Calu3 (cell line): ENCODE measurements at regions of chr20 and their contacts with region 1.

Region 1: GRCh38 chr20:57999465-58000111 is 228.9 kb downstream of the ANKRD60 start:
- DNase-seq: peak; percentile 28
- H3K4me3 Mint-ChIP-seq: no peak overlapping the region
- H3K27ac Mint-ChIP-seq: peak overlapping the region; percentile 27
- H3K4me1 Mint-ChIP-seq: peaks cover 51% of the 10 kb centered on the region
- H3K27me3 Mint-ChIP-seq: no peaks in the 10 kb centered on the region
- CTCF ChIP-seq: no peak

Region 2: GRCh38 chr20:57748601-57749130 is 250.9 kb before region 1 on chr20:
- CTCF ChIA-PET with region 1: no interaction called
- intact Hi-C with region 1: loop called (anchors 5 kb)
- DNase-seq: peak; percentile 96
- H3K4me3 Mint-ChIP-seq: peak overlapping the region; percentile 75
- H3K27ac Mint-ChIP-seq: peak overlapping the region; percentile 98
- H3K4me1 Mint-ChIP-seq: peaks cover 32% of the 10 kb centered on the region
- H3K27me3 Mint-ChIP-seq: no peaks in the 10 kb centered on the region
- CTCF ChIP-seq: no peak

Region 3: GRCh38 chr20:57941602-57942381 is 57.8 kb before region 1 on chr20:
- CTCF ChIA-PET with region 1: no interaction called
- intact Hi-C with region 1: loop called (anchors 5 kb)
- DNase-seq: peak; percentile 49
- H3K4me3 Mint-ChIP-seq: peak overlapping the region; percentile 5
- H3K27ac Mint-ChIP-seq: no peak overlapping the region
- H3K4me1 Mint-ChIP-seq: peaks cover 63% of the 10 kb centered on the region
- H3K27me3 Mint-ChIP-seq: no peaks in the 10 kb centered on the region
- CTCF ChIP-seq: no peak

Region 4: DNA sequence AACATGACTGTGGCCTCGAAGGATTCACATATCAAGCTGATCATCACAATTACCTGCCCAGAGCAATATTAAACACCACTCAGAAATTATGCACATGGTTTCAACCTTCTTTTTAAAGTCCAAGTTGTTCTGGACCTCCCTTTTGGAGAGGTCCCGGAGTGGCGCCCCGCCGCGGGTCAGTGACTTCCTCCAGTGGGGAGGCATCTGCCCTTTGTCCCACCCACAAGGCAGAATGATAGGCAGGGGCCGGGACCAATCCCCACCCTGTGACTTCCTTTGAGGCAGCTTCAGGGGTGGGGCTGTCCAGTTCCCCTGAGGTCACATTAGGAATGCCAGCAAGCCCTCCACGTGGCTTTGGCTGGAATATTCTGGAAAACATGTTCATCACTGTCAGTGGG is 21.9 kb after region 1 on chr20:
- CTCF ChIA-PET with region 1: no interaction called
- intact Hi-C with region 1: no loop called
- DNase-seq: no peak
- H3K4me3 Mint-ChIP-seq: no peak overlapping the region
- H3K27ac Mint-ChIP-seq: peak overlapping the region; percentile 94
- H3K4me1 Mint-ChIP-seq: peaks cover 52% of the 10 kb centered on the region
- H3K27me3 Mint-ChIP-seq: no peaks in the 10 kb centered on the region
- CTCF ChIP-seq: no peak